ENCODE measurements at regions of chr17 and their contacts with region 1.

Region 1: GRCh38 chr17:79045842-79046196 is 21.9 kb downstream of the C1QTNF1 start:
- DNase-seq: peak; percentile 75
- ATAC-seq: peak; percentile 96
- H3K4me3 Mint-ChIP-seq: no peak overlapping the region
- H3K27ac Mint-ChIP-seq: no peak overlapping the region
- H3K4me1 Mint-ChIP-seq: no peaks in the 10 kb centered on the region
- H3K27me3 Mint-ChIP-seq: peaks cover 8% of the 10 kb centered on the region
- CTCF ChIP-seq: peak; percentile 79

Region 2: DNA sequence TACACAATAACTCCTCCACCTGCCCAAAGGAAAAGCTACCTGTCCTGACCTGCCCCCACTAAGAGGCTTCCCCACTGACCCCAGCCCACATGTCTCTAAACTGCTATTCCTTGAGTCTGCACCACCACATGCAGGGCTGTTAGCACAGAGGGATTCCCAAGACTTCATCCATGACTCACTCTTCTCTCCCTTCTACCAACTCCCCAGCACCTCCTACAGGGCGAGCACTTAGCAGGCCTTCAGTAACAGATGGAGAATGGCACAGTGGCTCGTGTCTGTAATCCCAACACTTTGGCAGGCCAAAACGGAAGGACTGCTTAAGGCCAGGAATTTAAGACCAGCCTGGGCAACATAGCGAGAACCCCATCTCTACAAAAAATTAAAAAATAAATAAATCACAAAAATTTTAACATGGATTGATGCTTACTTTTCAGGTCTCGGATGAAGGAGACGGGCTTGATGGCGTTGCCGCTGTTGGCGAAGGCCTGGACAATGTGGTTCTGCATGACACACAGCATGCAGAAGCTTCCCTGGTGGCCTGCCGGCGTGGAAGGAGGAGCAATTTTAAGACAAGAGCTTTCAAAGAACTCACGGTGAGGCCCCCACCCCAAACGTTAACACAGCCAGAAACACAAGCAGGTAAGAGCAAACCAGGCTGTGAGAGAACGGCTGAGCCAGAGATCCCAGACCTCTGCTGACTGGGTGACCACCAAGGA is 217.2 kb before region 1 on chr17:
- CTCF ChIA-PET with region 1: no interaction called
- POLR2A ChIA-PET with region 1: no interaction called
- intact Hi-C with region 1: no loop called
- DNase-seq: peak; percentile 35
- ATAC-seq: peak; percentile 47
- H3K4me3 Mint-ChIP-seq: no peak overlapping the region
- H3K27ac Mint-ChIP-seq: peak overlapping the region; percentile 1
- H3K4me1 Mint-ChIP-seq: peaks cover 20% of the 10 kb centered on the region
- H3K27me3 Mint-ChIP-seq: no peaks in the 10 kb centered on the region
- CTCF ChIP-seq: no peak

Region 3: DNA sequence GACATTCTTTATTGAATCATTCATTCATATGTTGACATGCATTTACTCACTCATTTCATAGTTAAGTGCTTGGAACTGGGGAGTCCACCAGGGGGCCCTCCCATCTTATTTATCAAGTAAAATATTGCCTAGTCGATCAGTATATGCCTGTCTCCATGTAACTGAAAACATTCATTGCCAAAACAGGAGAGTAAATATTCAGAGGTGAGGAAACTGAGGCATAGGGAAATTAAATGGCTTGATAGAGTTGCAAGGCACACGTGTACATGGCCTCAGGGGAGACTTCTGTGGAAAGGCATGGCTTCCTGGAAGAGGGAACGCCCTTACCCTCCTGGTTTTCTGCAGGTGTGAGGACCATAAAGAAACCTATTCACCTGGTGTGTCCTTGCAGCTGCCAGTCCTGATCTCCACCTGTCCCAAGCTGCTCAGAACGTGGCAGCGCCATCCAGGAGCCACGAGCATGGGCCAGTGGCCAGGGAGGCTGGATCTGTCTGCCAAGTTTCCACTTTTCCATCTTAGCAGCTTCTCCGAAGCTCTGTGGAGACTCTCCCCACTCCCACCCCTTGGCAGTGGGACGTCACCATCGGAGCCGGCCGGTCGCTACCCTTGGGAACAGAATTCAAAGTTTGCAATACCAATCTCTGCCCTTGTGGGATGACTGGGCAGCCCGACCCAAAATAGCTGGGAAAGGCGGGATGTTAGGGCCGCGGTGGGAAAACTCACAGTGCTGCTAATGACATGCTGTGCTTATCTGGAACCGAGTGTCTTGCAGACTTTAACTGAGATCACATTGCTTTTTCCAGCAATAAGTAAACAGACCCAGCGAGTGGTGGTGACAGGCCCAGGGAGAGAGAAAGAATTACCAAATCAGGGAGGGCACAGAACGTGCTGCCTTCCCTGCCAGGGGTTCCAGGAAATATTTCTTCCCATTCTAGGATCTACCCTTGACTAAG is 25.9 kb before region 1 on chr17:
- CTCF ChIA-PET with region 1: interaction called, 17 read pairs
- POLR2A ChIA-PET with region 1: no interaction called
- intact Hi-C with region 1: no loop called
- DNase-seq: peak; percentile 84
- ATAC-seq: peak; percentile 67
- H3K4me3 Mint-ChIP-seq: no peak overlapping the region
- H3K27ac Mint-ChIP-seq: no peak overlapping the region
- H3K4me1 Mint-ChIP-seq: peaks cover 3% of the 10 kb centered on the region
- H3K27me3 Mint-ChIP-seq: peaks cover 4% of the 10 kb centered on the region
- CTCF ChIP-seq: peak; percentile 71

Region 4: DNA sequence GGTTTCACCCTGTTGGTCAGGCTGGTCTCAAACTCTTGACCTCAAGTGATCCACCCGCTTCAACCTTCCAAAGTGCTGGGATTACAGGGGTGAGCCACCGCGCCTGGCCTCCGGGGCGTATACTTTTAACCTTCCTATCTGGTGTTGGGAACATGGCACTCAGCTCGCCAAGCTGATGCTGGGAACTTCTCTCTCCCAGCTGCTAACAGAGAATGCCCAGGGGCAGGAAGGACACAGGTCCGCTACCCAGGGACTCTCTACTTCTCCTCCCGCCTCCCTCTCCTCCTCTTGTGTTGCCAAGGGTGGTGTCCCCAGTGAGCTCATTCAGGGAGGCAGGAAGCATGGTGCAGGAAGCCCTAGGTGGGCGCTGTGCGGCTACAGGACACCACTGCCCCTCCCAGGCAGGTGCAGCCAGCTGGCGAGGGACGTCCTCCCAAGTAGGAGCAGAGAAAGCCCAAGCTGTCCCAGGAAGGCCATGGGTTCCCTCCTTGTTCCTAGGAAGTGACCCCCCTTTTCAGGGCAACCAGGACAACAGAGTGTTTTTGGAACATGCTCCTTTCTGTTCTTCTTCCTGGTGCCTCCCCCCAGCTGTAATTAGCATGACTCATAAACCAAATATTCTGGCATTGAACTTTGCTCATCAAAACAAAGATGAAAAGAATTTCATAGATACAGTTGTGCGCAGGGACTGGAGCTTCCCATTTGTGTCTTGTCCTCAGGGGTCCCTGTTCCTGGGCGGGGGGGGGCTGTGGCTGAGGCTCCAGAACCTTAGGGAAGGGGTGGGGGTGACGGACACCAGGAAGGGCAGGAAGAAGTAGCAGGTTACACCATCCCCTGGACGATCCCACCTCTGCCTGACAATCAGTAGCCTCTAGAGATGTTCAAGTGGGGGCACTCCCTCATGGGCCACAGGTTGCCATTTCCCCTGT is 19.2 kb before region 1 on chr17:
- CTCF ChIA-PET with region 1: interaction called, 35 read pairs
- POLR2A ChIA-PET with region 1: no interaction called
- intact Hi-C with region 1: no loop called
- DNase-seq: no peak
- ATAC-seq: no peak
- H3K4me3 Mint-ChIP-seq: no peak overlapping the region
- H3K27ac Mint-ChIP-seq: no peak overlapping the region
- H3K4me1 Mint-ChIP-seq: peaks cover 6% of the 10 kb centered on the region
- H3K27me3 Mint-ChIP-seq: peaks cover 12% of the 10 kb centered on the region
- CTCF ChIP-seq: no peak

Region 5: DNA sequence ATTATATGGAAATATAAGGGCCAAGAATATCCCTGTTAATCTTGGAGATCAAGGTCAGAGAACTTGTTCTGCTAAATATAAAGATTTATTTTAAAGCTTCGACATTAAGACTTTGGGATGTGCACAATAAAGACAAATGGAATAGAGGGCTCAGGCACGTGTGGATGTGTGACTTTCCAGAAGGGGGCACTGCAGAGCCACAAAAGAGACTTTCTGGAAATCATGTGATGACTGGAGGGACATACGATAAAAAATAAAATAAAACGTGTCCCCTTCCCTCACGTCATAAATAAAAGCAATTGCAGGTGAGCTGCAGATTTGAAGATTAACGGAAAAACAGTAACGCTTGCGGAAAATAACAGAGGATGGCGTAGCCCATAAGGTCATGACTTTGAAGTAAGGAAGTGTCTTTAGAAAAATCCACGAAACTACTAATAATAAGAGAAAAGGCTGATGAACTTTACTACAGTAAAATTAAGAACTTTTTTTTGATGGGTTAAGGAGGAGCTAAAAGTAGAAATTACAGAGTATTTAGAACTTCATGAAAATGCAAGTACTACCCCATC is 19.4 kb after region 1 on chr17:
- CTCF ChIA-PET with region 1: interaction called, 13 read pairs
- POLR2A ChIA-PET with region 1: no interaction called
- intact Hi-C with region 1: no loop called
- DNase-seq: peak; percentile 79
- ATAC-seq: peak; percentile 82
- H3K4me3 Mint-ChIP-seq: peak overlapping the region; percentile 23
- H3K27ac Mint-ChIP-seq: peak overlapping the region; percentile 55
- H3K4me1 Mint-ChIP-seq: peaks cover 5% of the 10 kb centered on the region
- H3K27me3 Mint-ChIP-seq: peaks cover 2% of the 10 kb centered on the region
- CTCF ChIP-seq: peak; percentile 75

Region 6: GRCh38 chr17:79082311-79083190 is 36.7 kb after region 1 on chr17:
- CTCF ChIA-PET with region 1: interaction called, 23 read pairs
- POLR2A ChIA-PET with region 1: no interaction called
- intact Hi-C with region 1: no loop called
- DNase-seq: peak; percentile 56
- ATAC-seq: peak; percentile 76
- H3K4me3 Mint-ChIP-seq: no peak overlapping the region
- H3K27ac Mint-ChIP-seq: no peak overlapping the region
- H3K4me1 Mint-ChIP-seq: no peaks in the 10 kb centered on the region
- H3K27me3 Mint-ChIP-seq: no peaks in the 10 kb centered on the region
- CTCF ChIP-seq: peak; percentile 91